Left ventricle myocardium superior (tissue), 1 donor: ENCODE measurements at regions of chr4 and their contacts with region 1.

Region 1: DNA sequence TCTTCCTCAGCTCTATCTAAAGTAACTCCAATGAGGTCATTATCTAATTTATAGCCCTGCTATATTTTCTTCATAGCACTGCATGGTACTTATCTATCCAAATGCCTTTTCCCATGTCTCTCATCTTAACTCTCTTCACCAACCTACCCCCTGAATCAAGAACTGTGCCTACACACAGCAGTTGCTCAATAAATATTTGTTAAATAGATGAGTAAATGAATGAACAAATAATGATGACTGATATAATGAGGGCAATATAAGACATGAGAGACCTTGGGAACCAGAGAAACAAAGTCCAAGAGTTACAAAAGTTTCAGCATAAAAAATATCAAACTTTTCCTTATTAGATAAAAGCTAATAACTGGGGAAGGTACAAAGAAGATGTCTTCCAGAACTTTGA is 19.6 kb downstream of the CAMK2D start:
- DNase-seq: no peak
- ATAC-seq: peak; percentile 18

Region 2: DNA sequence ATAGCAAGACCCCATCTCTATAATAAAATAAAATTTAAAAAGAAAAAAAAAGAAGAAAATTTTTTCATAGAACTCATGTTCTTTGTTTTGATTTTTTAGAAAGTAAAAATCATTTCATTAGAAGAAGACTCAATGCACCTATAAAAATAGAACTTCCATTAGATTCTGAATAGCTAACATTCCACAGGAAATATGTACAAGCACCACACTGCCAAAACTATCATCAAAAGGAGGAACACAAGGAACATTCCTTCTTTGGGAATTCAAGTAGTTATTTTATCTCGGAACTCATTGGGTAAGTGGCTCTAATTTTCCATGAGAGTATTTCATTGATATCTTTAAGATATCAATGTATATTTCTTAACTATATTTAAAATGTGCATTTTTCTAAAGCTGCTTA is 138.0 kb before region 1 on chr4:
- intact Hi-C with region 1: loop called (anchors 1 kb)
- DNase-seq: no peak
- ATAC-seq: no peak

Region 3: GRCh38 chr4:113708250-113708649 is 33.7 kb before region 1 on chr4:
- intact Hi-C with region 1: no loop called
- DNase-seq: no peak
- ATAC-seq: peak; percentile 67

Region 4: DNA sequence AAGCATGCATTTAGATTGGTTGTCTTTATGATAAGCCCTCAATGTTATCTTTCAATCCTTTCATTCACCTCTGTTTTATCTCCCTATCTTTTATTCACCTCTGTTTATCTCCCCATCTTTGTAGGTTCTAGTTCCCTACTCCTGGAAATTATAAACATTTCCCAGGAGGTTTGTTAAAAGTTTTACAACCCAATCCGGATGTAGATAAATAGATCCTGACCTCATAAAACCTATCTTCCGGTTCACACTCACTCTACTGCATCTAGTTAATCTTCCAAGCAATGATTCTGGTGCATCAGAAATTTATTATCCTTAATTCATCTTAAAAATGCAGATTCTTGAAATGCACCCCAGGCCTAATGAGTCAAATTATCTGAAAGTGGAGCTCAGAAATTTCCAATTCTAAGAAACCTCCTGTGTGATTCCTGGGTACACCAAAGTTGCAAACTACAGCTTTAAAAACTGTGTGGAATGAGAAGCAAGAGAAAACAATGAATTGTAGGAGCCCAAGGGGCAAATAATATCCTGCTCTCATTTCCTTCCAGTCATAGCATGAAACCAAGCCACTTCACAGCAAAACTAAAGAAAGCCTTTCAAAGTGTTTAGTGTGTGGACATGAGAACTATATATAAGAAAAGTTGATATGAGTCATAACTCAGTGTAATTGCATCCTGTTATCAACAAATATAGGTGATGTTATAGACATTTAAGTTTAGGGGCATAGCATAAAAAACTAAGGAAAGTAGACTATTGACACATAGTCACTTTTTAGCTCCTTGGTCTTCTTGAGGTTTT is 805.6 kb after region 1 on chr4:
- intact Hi-C with region 1: no loop called
- DNase-seq: no peak
- ATAC-seq: no peak